CD4-positive, alpha-beta T cell (primary cell): ENCODE measurements at regions of chr12 and their contacts with region 1.

Region 1: DNA sequence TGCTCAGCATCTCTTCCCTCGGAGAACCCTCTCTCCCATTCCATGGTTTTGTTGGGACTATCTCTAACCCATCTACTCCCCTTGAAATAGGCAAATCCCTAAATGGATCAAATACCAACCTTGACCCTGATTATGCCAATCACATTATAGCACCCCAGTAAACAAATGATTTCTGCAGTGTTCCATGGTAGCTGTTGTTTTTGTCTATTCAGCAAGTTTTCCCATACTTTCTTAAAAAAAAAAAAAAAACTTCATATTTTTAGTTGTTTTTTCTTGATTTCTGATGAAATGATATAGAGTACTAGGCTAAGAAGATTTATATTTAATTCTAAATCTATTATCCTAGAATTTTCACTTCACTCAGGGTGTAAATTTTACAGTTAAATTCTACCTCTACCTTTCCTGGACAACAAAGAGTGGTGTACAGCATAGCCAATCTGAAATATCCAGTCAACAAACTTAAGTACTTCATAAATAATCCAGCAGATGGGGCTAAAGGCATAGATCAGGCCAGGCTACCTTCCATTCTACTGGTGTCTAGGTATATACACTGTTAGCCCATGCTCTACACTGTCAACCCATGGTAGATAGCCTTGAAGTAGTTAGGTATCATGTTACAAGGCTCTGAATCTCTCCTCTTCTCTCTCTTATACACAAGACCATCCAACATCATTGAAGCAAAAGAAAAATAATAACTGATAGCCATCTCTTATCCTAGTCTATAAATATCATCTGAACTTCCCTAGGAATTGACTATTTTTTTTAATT is 82.2 kb downstream of the PLEKHG7 start:
- DNase-seq: peak in 9 of 14 experiments; percentile 2 to 79 (median 15)
- ATAC-seq: peak; percentile 100
- H3K4me3 ChIP-seq: no peak overlapping the region
- H3K4me3 Mint-ChIP-seq: no peak overlapping the region
- H3K27ac ChIP-seq: no peak overlapping the region
- H3K27ac Mint-ChIP-seq: no peak overlapping the region
- H3K4me1 ChIP-seq: no peaks in the 10 kb centered on the region
- H3K4me1 Mint-ChIP-seq: no peaks in the 10 kb centered on the region
- H3K27me3 ChIP-seq: no peaks in the 10 kb centered on the region
- H3K27me3 Mint-ChIP-seq: no peaks in the 10 kb centered on the region
- CTCF ChIP-seq: peak; percentile 49

Region 2: DNA sequence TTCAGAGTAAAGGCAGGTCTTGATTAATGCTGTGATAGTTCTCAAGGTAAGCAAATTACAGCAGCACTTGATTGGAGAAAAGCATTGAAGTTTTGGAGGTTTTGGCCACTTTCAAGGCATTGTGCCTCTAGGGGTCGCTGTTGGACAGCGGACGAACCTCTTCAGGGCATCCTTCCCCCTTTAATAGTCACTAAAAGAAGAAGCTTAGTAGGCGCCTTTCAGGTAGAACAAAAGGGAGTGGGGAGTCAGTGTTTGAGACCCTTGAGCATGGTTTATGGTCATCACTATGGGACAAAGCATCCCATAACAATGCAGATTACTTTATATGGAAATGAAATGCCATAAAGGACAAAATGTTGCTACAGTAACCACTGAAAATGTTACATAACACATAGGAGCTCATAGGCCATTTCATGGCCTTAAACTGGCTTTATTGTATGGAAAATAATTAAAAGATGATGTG is 1402.9 kb before region 1 on chr12:
- CTCF ChIA-PET with region 1: interaction called, 3 read pairs
- POLR2A ChIA-PET with region 1: no interaction called
- intact Hi-C with region 1: loop called in 1 of 2 experiments (anchors 10 kb)
- DNase-seq: peak; percentile 77 to 94 (median 86)
- ATAC-seq: peak; percentile 89
- H3K4me3 ChIP-seq: peak overlapping the region; percentile 21
- H3K4me3 Mint-ChIP-seq: peak overlapping the region; percentile 81
- H3K27ac ChIP-seq: no peak overlapping the region
- H3K27ac Mint-ChIP-seq: peak overlapping the region; percentile 1
- H3K4me1 ChIP-seq: peaks cover 7% of the 10 kb centered on the region
- H3K4me1 Mint-ChIP-seq: peaks cover 5% of the 10 kb centered on the region
- H3K27me3 ChIP-seq: peaks cover 0 to 5% of the 10 kb centered on the region in 2 experiments
- H3K27me3 Mint-ChIP-seq: peaks cover 4% of the 10 kb centered on the region
- CTCF ChIP-seq: peak; percentile 90

Region 3: DNA sequence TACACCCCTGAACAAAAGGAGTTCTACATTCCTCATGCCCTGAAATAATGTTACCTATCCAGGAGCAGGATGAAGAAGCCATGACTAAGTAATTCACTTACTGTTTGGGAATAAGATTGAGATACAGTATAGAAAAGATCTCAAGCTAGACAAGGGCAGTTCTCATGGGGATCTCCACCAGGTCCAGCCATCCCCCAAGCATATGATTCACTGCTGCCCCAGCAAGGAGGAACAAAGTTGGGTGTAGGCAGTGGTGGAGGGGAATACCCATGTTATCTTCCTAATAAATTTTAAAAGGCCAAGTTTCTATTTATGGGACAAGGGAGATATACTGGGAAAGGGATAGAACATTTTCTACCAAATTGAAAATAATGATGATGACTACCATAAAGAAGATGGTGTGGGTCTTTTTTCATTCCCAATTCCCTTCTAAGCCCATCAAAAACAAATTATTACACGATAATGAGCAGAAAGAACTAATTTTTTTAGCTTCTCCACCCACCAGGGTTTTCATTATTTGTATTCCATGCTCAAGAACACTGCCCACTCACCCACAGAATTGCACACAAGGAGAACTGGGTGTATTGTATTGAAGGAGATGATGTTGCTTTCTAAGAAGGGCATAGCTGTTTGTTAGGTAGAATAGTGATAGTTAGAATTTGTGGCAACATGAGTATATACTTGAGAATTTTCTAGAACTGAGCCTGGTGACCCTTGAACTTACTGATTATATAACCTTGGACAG is 844.0 kb before region 1 on chr12:
- CTCF ChIA-PET with region 1: no interaction called
- POLR2A ChIA-PET with region 1: no interaction called
- intact Hi-C with region 1: no loop called
- DNase-seq: peak in 2 of 14 experiments; percentile 19 to 32
- ATAC-seq: no peak
- H3K4me3 ChIP-seq: no peak overlapping the region
- H3K4me3 Mint-ChIP-seq: no peak overlapping the region
- H3K27ac ChIP-seq: no peak overlapping the region
- H3K27ac Mint-ChIP-seq: no peak overlapping the region
- H3K4me1 ChIP-seq: no peaks in the 10 kb centered on the region
- H3K4me1 Mint-ChIP-seq: no peaks in the 10 kb centered on the region
- H3K27me3 ChIP-seq: no peaks in the 10 kb centered on the region
- H3K27me3 Mint-ChIP-seq: no peaks in the 10 kb centered on the region
- CTCF ChIP-seq: no peak

Region 4: DNA sequence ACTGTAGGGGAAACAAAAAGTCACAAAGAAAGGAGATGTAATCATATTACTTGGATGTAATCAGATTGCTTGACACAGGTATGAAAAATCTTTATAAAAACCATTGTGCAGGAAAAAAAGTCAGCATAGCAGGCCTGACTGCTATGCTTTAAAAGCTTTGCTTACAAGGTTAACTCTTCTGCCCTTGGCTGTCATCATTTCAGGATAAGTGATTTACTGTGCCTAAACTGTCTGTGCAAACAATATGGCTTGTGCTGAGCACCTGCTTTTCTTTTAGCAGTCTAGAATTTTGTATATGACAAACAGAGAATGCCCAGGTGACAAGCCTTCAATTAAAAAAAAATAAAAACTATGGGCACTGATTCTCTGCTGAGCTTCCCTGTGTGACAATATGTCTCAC is 146.0 kb before region 1 on chr12:
- CTCF ChIA-PET with region 1: no interaction called
- POLR2A ChIA-PET with region 1: no interaction called
- intact Hi-C with region 1: no loop called
- DNase-seq: no peak
- ATAC-seq: no peak
- H3K4me3 ChIP-seq: no peak overlapping the region
- H3K4me3 Mint-ChIP-seq: no peak overlapping the region
- H3K27ac ChIP-seq: no peak overlapping the region
- H3K27ac Mint-ChIP-seq: no peak overlapping the region
- H3K4me1 ChIP-seq: no peaks in the 10 kb centered on the region
- H3K4me1 Mint-ChIP-seq: no peaks in the 10 kb centered on the region
- H3K27me3 ChIP-seq: no peaks in the 10 kb centered on the region
- H3K27me3 Mint-ChIP-seq: no peaks in the 10 kb centered on the region
- CTCF ChIP-seq: no peak

Region 5: GRCh38 chr12:92928962-92929915 is 144.3 kb after region 1 on chr12 and contains the start of gene EEA1:
- CTCF ChIA-PET with region 1: interaction called, 3 read pairs
- POLR2A ChIA-PET with region 1: interaction called, 3 read pairs
- intact Hi-C with region 1: loop called in 1 of 2 experiments (anchors 5 kb)
- DNase-seq: peak; percentile 88 to 97 (median 94)
- ATAC-seq: peak; percentile 77
- H3K4me3 ChIP-seq: peak within 1 kb of the TSS; percentile 81
- H3K4me3 Mint-ChIP-seq: peak within 1 kb of the TSS; percentile 91
- H3K27ac ChIP-seq: peak within 1 kb of the TSS; percentile 86 to 90
- H3K27ac Mint-ChIP-seq: peak within 1 kb of the TSS; percentile 94
- H3K4me1 ChIP-seq: peaks cover 23% of the 10 kb centered on the region
- H3K4me1 Mint-ChIP-seq: peaks cover 42% of the 10 kb centered on the region
- H3K27me3 ChIP-seq: no peaks in the 10 kb centered on the region
- H3K27me3 Mint-ChIP-seq: no peaks in the 10 kb centered on the region
- CTCF ChIP-seq: peak; percentile 28
- total RNA-seq, gene EEA1: 10.5 to 11.1 TPM

Region 6: GRCh38 chr12:92987362-92987761 is 202.4 kb after region 1 on chr12:
- CTCF ChIA-PET with region 1: no interaction called
- POLR2A ChIA-PET with region 1: no interaction called
- intact Hi-C with region 1: loop called (anchors 5 kb)
- DNase-seq: peak in 4 of 14 experiments; percentile 13 to 73 (median 70)
- ATAC-seq: peak; percentile 81
- H3K4me3 ChIP-seq: no peak overlapping the region
- H3K4me3 Mint-ChIP-seq: peak overlapping the region; percentile 26
- H3K27ac ChIP-seq: no peak overlapping the region
- H3K27ac Mint-ChIP-seq: no peak overlapping the region
- H3K4me1 ChIP-seq: peaks cover 7% of the 10 kb centered on the region
- H3K4me1 Mint-ChIP-seq: peaks cover 12% of the 10 kb centered on the region
- H3K27me3 ChIP-seq: no peaks in the 10 kb centered on the region
- H3K27me3 Mint-ChIP-seq: no peaks in the 10 kb centered on the region
- CTCF ChIP-seq: peak; percentile 80

Region 7: DNA sequence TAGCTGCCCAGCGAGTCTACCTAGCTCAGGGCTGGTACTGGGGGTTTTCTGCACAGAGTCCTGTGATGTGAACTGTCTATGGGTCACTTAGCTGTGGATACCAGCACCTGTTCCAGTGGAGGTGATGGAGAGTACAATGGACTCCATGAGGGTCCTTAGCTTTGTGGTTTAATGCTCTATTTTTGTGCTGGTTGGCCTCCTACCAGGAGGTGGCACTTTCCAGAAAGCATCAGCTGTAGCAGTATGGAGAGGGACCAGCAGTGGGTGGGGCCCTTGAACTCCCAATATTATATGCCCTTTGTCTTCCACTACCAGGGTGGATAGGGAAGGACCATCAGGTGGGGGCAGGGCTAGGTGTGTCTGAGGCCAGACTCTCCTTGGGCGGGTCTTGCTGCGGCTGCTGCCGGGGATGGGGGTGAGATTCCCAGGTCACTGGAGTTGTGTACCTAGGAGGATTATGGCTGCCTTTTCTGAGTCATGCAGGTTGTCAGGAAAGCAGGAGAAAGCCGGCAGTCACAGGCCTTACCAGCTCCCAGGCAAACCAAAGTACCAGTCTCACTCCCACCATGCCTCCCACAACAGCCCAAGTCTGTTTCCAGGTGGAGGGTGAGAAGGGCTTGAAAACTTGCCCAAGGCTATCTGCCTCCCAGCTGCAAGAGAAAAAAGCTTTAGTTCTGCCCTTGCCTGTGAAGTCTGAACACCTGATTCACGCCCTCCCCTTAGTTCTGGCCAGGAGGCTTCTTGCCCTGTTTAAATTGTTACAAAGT is 429.7 kb after region 1 on chr12:
- CTCF ChIA-PET with region 1: no interaction called
- POLR2A ChIA-PET with region 1: no interaction called
- intact Hi-C with region 1: no loop called
- DNase-seq: no peak
- ATAC-seq: no peak
- H3K4me3 ChIP-seq: no peak overlapping the region
- H3K4me3 Mint-ChIP-seq: no peak overlapping the region
- H3K27ac ChIP-seq: no peak overlapping the region
- H3K27ac Mint-ChIP-seq: no peak overlapping the region
- H3K4me1 ChIP-seq: no peaks in the 10 kb centered on the region
- H3K4me1 Mint-ChIP-seq: no peaks in the 10 kb centered on the region
- H3K27me3 ChIP-seq: no peaks in the 10 kb centered on the region
- H3K27me3 Mint-ChIP-seq: no peaks in the 10 kb centered on the region
- CTCF ChIP-seq: no peak

Region 8: GRCh38 chr12:93390549-93391297 is 605.7 kb after region 1 on chr12:
- CTCF ChIA-PET with region 1: no interaction called
- POLR2A ChIA-PET with region 1: no interaction called
- intact Hi-C with region 1: loop called in 1 of 2 experiments (anchors 1 kb)
- DNase-seq: no peak
- ATAC-seq: no peak
- H3K4me3 ChIP-seq: no peak overlapping the region
- H3K4me3 Mint-ChIP-seq: no peak overlapping the region
- H3K27ac ChIP-seq: no peak overlapping the region
- H3K27ac Mint-ChIP-seq: no peak overlapping the region
- H3K4me1 ChIP-seq: peaks cover 5% of the 10 kb centered on the region
- H3K4me1 Mint-ChIP-seq: peaks cover 39% of the 10 kb centered on the region
- H3K27me3 ChIP-seq: no peaks in the 10 kb centered on the region
- H3K27me3 Mint-ChIP-seq: no peaks in the 10 kb centered on the region
- CTCF ChIP-seq: no peak

Region 9: DNA sequence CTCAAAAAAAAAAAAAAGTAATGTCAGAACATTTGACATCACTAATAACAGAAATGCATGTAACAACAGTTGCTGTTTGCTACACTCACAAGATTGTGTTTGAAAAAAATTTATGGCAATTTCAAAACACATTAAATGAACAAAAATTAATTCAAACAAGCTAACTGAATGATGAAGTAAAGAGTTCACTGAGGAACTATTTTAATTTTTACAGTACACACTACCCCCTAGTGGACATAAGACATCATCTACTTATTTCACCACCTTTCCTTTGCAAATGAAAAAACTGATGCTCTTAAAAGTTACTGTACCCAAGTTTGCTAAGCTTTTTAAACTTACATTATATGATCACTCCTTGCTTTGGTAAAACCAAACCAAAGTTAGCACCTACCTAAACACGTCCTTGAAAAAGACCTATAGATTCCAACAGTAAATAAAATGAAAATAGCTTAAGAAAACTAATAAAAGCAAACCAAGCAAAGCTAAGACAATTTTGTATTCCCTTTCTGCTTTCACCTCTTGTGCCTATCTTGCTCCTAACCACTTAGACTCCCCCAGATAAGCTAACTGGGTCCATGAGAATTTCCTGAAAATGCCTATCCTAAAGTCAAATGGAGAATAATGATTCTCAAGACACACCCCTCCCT is 634.5 kb after region 1 on chr12:
- CTCF ChIA-PET with region 1: interaction called, 5 read pairs
- POLR2A ChIA-PET with region 1: no interaction called
- intact Hi-C with region 1: loop called in 1 of 2 experiments (anchors 5 kb)
- DNase-seq: peak in 3 of 14 experiments; percentile 66 to 73 (median 72)
- ATAC-seq: peak; percentile 74
- H3K4me3 ChIP-seq: no peak overlapping the region
- H3K4me3 Mint-ChIP-seq: peak overlapping the region; percentile 5
- H3K27ac ChIP-seq: no peak overlapping the region
- H3K27ac Mint-ChIP-seq: peak overlapping the region; percentile 31
- H3K4me1 ChIP-seq: peaks cover 21% of the 10 kb centered on the region
- H3K4me1 Mint-ChIP-seq: peaks cover 91% of the 10 kb centered on the region
- H3K27me3 ChIP-seq: no peaks in the 10 kb centered on the region
- H3K27me3 Mint-ChIP-seq: no peaks in the 10 kb centered on the region
- CTCF ChIP-seq: peak; percentile 76